RWPE1 (cell line): ENCODE measurements at regions of chr19 and their contacts with region 1.

Region 1: GRCh38 chr19:44653977-44654774 is 10.5 kb downstream of the PVR start:
- DNase-seq: peak; percentile 42
- H3K27ac ChIP-seq: peak overlapping the region; percentile 7
- CTCF ChIP-seq: peak; percentile 62

Region 2: GRCh38 chr19:44570984-44571684 is 83.0 kb before region 1 on chr19:
- CTCF ChIA-PET with region 1: interaction called, 12 read pairs
- POLR2A ChIA-PET with region 1: no interaction called
- DNase-seq: peak; percentile 54
- H3K27ac ChIP-seq: no peak overlapping the region
- CTCF ChIP-seq: peak; percentile 69

Region 3: GRCh38 chr19:44620667-44621066 is 33.5 kb before region 1 on chr19:
- CTCF ChIA-PET with region 1: no interaction called
- POLR2A ChIA-PET with region 1: no interaction called
- DNase-seq: no peak
- H3K27ac ChIP-seq: no peak overlapping the region
- CTCF ChIP-seq: no peak

Region 4: GRCh38 chr19:44635581-44636438 is 18.4 kb before region 1 on chr19:
- CTCF ChIA-PET with region 1: no interaction called
- POLR2A ChIA-PET with region 1: no interaction called
- DNase-seq: no peak
- H3K27ac ChIP-seq: peak overlapping the region; percentile 80
- CTCF ChIP-seq: no peak

Region 5: GRCh38 chr19:44684892-44685863 is 31.0 kb after region 1 on chr19:
- CTCF ChIA-PET with region 1: no interaction called
- POLR2A ChIA-PET with region 1: no interaction called
- DNase-seq: peak; percentile 47
- H3K27ac ChIP-seq: peak overlapping the region; percentile 80
- CTCF ChIP-seq: no peak

Region 6: GRCh38 chr19:44788971-44789370 is 134.8 kb after region 1 on chr19:
- CTCF ChIA-PET with region 1: no interaction called
- POLR2A ChIA-PET with region 1: interaction called, 15 read pairs
- DNase-seq: no peak
- H3K27ac ChIP-seq: no peak overlapping the region
- CTCF ChIP-seq: no peak